Right ventricle myocardium superior (tissue), 1 donor: ENCODE measurements at regions of chr3 and their contacts with region 1.

Region 1: GRCh38 chr3:14508961-14509795 is 31.0 kb downstream of the GRIP2 start:
- DNase-seq: peak; percentile 83
- ATAC-seq: peak; percentile 81

Region 2: DNA sequence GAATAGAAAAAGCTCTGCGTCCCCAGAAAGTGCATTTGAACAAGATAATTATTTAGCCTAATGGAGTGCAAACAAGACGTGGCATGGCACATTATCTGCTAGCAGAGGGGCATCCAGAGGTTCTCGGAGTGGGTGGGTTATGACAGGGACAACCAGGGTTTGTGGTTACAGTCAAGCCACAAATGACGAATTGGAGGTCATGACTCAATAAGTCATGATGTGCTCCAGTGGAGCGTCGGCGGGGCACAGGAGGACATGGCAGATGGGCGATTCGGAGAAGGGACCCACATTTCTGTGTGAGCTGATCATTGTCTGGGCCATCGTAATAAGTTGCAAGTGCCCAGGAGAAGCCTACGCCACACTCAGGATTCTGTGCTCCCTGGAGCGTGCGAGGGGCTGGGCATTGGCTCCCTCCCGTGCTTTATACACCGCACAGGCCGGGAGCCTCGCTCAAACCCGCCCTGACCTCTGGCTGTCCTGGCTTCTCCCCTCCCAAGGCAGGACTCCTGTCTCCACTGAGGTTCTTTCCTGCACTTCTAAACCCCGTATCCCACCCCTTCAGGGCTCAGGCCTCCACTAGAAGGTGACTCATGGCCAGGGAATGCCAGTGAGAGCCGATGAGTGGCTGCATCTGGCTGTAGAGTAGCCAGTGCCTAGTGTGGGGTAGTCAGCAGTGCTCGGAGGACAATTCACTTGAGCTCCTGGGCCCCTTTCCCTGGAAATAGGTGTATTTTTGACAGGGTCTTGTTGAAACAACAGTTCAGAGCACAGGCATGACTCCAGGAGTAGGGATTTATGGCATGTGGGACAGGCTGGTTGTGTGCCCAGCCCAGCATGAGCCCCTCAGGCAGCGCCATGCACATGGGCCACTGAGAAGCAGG is 36.5 kb before region 1 on chr3:
- intact Hi-C with region 1: no loop called
- DNase-seq: no peak
- ATAC-seq: no peak

Region 3: GRCh38 chr3:14548321-14548729 is 39.1 kb after region 1 on chr3:
- intact Hi-C with region 1: loop called (anchors 1 kb)
- DNase-seq: peak; percentile 81
- ATAC-seq: peak; percentile 93

Region 4: GRCh38 chr3:14915636-14916222 is 406.6 kb after region 1 on chr3:
- intact Hi-C with region 1: loop called (anchors 10 kb)
- DNase-seq: no peak
- ATAC-seq: no peak